ENCODE measurements at regions of chr10 and their contacts with region 1.

Region 1: DNA sequence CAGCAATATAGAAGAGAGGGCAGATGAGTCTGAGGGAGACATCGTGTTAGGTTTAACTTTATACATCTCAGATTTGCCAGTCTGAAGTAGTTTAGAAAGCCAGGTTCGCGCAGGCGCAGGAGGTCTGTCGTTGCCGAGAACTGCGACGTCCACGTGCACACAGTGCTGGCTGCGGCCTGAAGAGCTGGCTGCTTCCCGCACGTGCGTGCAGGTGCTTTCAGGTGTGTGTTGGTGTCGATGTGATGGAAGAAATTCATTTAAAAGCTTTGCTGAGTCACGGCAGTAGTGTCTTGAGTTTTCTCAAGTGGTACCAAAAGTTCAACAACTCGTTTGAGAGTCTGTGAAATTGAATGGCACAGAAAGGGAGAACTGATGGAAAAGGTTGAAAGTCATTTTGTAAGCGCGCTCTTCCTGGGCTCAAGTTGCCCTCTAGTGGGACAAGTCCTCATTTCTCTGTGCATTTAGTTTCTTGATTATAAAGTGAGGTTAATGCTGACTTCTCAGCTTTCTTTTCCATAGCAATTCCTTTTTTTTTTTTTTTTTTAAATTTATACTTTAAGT is 18.6 kb downstream of the WDR37 start:
- DNase-seq: no peak
- ATAC-seq: no peak
- H3K4me3 ChIP-seq: no peak overlapping the region
- H3K27ac ChIP-seq: no peak overlapping the region
- H3K4me1 ChIP-seq: no peaks in the 10 kb centered on the region
- H3K27me3 ChIP-seq: no peaks in the 10 kb centered on the region
- CTCF ChIP-seq: peak; percentile 23 to 51 (median 32); a peak in 4 of 6 replicates
- EP300 ChIP-seq: no peak
- POLR2A ChIP-seq: no peak
- RAD21 ChIP-seq: peak; percentile 39

Region 2: GRCh38 chr10:500876-501275 is 574.0 kb before region 1 on chr10:
- CTCF ChIA-PET with region 1: no interaction called
- POLR2A ChIA-PET with region 1: no interaction called
- RAD21 ChIA-PET with region 1: no interaction called
- SMC1A ChIA-PET with region 1: no interaction called
- in situ Hi-C with region 1: loop called (anchors 10 kb)
- intact Hi-C with region 1: no loop called
- DNase-seq: no peak
- ATAC-seq: no peak
- H3K4me3 ChIP-seq: no peak overlapping the region
- H3K27ac ChIP-seq: no peak overlapping the region
- H3K4me1 ChIP-seq: no peaks in the 10 kb centered on the region
- H3K27me3 ChIP-seq: peaks cover 0 to 2% of the 10 kb centered on the region in 2 experiments; a peak in 3 of 4 replicates
- CTCF ChIP-seq: no peak
- EP300 ChIP-seq: no peak
- POLR2A ChIP-seq: no peak
- RAD21 ChIP-seq: no peak

Region 3: GRCh38 chr10:649798-650440 is 424.9 kb before region 1 on chr10:
- CTCF ChIA-PET with region 1: no interaction called
- POLR2A ChIA-PET with region 1: no interaction called
- RAD21 ChIA-PET with region 1: no interaction called
- SMC1A ChIA-PET with region 1: no interaction called
- in situ Hi-C with region 1: no loop called
- intact Hi-C with region 1: no loop called
- DNase-seq: no peak
- ATAC-seq: no peak
- H3K4me3 ChIP-seq: no peak overlapping the region
- H3K27ac ChIP-seq: no peak overlapping the region
- H3K4me1 ChIP-seq: no peaks in the 10 kb centered on the region
- H3K27me3 ChIP-seq: no peaks in the 10 kb centered on the region
- CTCF ChIP-seq: no peak
- EP300 ChIP-seq: no peak
- POLR2A ChIP-seq: no peak
- RAD21 ChIP-seq: no peak

Measured in GM12878 (cell line).